GM12878 (cell line): ENCODE measurements at regions of chr1 and their contacts with region 1.

Region 1: GRCh38 chr1:79353224-79353623 is 346.7 kb upstream of the ADGRL4 start:
- DNase-seq: no peak
- ATAC-seq: peak; percentile 79
- H3K4me3 ChIP-seq: no peak overlapping the region
- H3K27ac ChIP-seq: no peak overlapping the region
- H3K4me1 ChIP-seq: no peaks in the 10 kb centered on the region
- H3K27me3 ChIP-seq: no peaks in the 10 kb centered on the region
- CTCF ChIP-seq: peak; percentile 40 to 54 (median 40)
- EP300 ChIP-seq: no peak
- POLR2A ChIP-seq: no peak
- RAD21 ChIP-seq: peak; percentile 32; the same call in 1 of the 2 replicates

Region 2: DNA sequence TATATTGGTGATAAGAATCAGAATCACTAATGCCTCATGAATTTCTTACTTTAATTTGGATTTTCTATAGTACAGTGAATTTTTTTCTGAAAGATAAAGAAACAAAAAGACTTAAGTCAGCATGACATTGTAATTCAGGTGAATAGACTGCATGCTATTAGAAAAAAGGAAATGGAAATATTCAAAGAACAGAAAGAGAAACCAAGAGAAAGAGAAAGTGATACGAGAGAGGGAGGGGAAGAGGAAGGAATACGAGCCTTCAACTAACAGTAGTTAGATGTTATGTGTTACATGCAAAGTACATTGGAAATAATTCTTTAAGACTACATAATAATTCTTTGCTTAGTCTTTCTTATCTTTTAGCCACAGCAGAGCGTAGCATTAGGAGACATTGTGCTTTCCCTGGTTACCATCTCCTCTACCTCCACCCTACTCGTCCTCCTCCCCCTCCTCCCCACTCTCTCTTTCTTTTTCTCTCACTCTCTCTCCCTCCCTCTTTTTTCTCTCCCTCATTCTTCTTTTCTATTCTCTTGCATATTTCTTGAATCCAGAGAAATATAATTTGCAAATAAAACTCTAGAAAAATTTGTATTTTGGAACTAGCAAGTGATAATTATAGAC is 300.3 kb before region 1 on chr1:
- CTCF ChIA-PET with region 1: no interaction called
- POLR2A ChIA-PET with region 1: no interaction called
- RAD21 ChIA-PET with region 1: no interaction called
- SMC1A ChIA-PET with region 1: no interaction called
- in situ Hi-C with region 1: no loop called
- intact Hi-C with region 1: no loop called
- DNase-seq: peak; percentile 13
- ATAC-seq: peak; percentile 83
- H3K4me3 ChIP-seq: peak overlapping the region; percentile 6; the same call in 1 of the 2 replicates
- H3K27ac ChIP-seq: no peak overlapping the region
- H3K4me1 ChIP-seq: no peaks in the 10 kb centered on the region
- H3K27me3 ChIP-seq: no peaks in the 10 kb centered on the region
- CTCF ChIP-seq: no peak
- EP300 ChIP-seq: no peak
- POLR2A ChIP-seq: no peak
- RAD21 ChIP-seq: no peak

Region 3: DNA sequence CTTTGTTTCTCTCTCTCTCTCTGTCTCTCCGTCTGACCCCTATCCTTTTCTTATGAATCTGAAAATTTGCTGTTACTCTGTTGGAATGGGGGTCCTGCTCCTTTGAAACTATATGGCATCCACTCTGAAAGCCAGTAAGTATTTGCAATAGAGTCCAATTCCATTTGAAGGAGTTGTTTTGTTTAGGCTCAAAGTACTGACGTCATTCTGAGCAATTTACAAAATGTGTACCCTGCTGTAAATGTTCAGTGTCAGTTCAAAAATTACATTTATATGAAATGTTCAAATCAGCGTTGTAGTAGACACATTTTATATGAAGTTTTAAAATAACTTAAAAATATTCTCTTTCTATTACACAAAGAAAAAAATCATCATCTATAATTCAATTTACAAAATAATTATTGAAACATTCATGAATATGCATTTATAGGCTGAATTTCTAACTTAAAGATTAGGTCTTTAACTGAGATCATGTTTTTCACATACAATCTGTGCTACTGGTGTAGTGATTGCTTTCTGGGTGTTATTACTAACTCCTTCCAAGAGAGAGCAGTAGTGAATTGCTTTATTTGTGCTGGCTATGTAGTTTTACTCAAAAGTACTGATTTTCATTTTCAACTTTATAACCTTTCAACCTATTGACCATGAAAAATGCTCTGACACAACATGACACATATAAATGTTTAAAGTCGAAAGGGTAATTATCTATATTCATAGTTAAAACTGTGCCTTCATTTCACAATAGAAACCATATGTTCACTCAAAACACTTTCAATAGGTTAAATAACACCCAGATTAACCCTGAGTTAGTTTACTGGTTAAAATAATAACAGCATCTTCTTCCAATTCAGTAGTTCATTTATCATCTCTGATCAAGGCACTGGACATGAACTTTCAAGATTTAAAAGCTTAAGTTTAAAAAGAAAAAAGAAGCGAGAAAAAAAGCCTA is 93.6 kb before region 1 on chr1:
- CTCF ChIA-PET with region 1: interaction called, 4 read pairs
- POLR2A ChIA-PET with region 1: no interaction called
- RAD21 ChIA-PET with region 1: no interaction called
- SMC1A ChIA-PET with region 1: no interaction called
- in situ Hi-C with region 1: no loop called
- intact Hi-C with region 1: loop called (anchors 5 kb)
- DNase-seq: no peak
- ATAC-seq: peak; percentile 77
- H3K4me3 ChIP-seq: no peak overlapping the region
- H3K27ac ChIP-seq: no peak overlapping the region
- H3K4me1 ChIP-seq: no peaks in the 10 kb centered on the region
- H3K27me3 ChIP-seq: no peaks in the 10 kb centered on the region
- CTCF ChIP-seq: peak; percentile 39 to 56 (median 44); a peak in 4 of 6 replicates
- EP300 ChIP-seq: no peak
- POLR2A ChIP-seq: no peak
- RAD21 ChIP-seq: peak; percentile 72

Region 4: DNA sequence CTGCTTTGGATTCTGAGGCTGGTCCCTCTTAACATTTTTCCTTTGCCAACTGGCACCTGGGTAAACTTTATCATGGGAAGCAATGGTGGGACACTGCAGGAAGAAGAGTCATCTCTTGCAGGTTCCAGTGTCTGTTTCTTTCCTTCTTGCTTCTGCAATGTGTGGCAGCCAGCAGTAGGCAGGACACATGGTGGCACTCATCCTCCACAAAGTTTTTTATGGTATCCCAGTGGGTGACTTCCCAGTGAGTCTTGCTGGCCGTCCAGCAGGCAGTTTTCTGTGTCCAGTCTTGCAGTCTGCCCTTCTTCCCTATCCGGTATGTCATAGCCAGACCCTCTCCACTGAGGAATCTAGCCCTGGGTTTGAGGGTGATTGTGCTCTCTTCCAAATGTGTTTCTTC is 21.5 kb before region 1 on chr1:
- CTCF ChIA-PET with region 1: interaction called, 10 read pairs
- POLR2A ChIA-PET with region 1: no interaction called
- RAD21 ChIA-PET with region 1: no interaction called
- SMC1A ChIA-PET with region 1: no interaction called
- in situ Hi-C with region 1: no loop called
- intact Hi-C with region 1: no loop called
- DNase-seq: no peak
- ATAC-seq: no peak
- H3K4me3 ChIP-seq: no peak overlapping the region
- H3K27ac ChIP-seq: no peak overlapping the region
- H3K4me1 ChIP-seq: no peaks in the 10 kb centered on the region
- H3K27me3 ChIP-seq: no peaks in the 10 kb centered on the region
- CTCF ChIP-seq: no peak
- EP300 ChIP-seq: no peak
- POLR2A ChIP-seq: no peak
- RAD21 ChIP-seq: no peak